ENCODE measurements at regions of chr15 and their contacts with region 1.

Region 1: DNA sequence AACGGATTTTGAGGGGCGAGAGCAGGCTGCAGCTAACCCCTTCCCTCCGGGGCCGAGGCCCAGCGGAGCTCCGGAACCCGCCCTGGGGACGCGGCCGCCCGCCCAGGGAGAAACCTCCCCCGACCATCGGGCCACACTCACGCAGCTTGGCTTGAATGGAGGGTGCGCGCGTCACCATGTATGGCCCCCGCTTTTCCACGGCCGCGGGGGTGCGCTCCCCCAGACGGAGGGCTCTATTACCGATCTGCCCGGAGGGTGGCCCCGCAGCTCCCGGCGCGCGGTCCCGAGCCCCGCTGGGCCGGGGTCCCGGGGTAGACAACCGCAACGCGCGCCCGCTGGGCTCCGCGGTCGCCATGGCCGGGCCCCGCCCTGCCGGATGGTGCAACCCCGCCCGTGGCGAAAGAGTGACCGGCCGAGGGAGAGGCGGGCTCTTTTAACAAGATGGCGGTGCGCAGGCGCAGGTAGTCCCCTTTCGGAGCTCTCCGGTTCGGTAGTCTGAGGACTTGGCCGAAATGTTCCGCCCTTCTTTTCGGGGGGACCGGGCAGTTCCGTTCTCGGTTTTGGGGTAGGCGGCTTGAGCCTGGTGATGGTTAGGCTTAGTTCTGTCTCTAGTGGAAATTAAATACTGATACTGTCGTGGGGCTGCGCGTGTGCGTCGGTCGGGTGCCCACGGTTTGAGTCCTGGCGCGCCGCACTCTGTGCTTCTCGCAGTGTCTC is at the start of gene FAM219B:
- DNase-seq: peak; percentile 30 to 84 (median 71)
- ATAC-seq: peak; percentile 79
- H3K4me3 ChIP-seq: peak within 1 kb of the TSS; percentile 85 to 89
- H3K4me3 Mint-ChIP-seq: peak within 1 kb of the TSS; percentile 94
- H3K27ac ChIP-seq: peak within 1 kb of the TSS; percentile 78 to 82
- H3K27ac Mint-ChIP-seq: peak within 1 kb of the TSS; percentile 95
- H3K4me1 ChIP-seq: peaks cover 28% of the 10 kb centered on the region
- H3K4me1 Mint-ChIP-seq: peaks cover 41% of the 10 kb centered on the region
- H3K27me3 ChIP-seq: no peaks in the 10 kb centered on the region
- H3K27me3 Mint-ChIP-seq: no peaks in the 10 kb centered on the region
- CTCF ChIP-seq: no peak
- total RNA-seq, gene FAM219B: 18.6 to 22.1 TPM

Region 2: GRCh38 chr15:74134387-74135027 is 772.1 kb before region 1 on chr15:
- CTCF ChIA-PET with region 1: no interaction called
- POLR2A ChIA-PET with region 1: no interaction called
- intact Hi-C with region 1: no loop called
- DNase-seq: no peak
- ATAC-seq: no peak
- H3K4me3 ChIP-seq: no peak overlapping the region
- H3K4me3 Mint-ChIP-seq: no peak overlapping the region
- H3K27ac ChIP-seq: no peak overlapping the region
- H3K27ac Mint-ChIP-seq: no peak overlapping the region
- H3K4me1 ChIP-seq: peaks cover 23% of the 10 kb centered on the region
- H3K4me1 Mint-ChIP-seq: peaks cover 35% of the 10 kb centered on the region
- H3K27me3 ChIP-seq: peaks cover 39 to 41% of the 10 kb centered on the region in 2 experiments
- H3K27me3 Mint-ChIP-seq: peaks cover 73% of the 10 kb centered on the region
- CTCF ChIP-seq: no peak

Region 3: GRCh38 chr15:74548241-74548640 is 358.4 kb before region 1 on chr15:
- CTCF ChIA-PET with region 1: no interaction called
- POLR2A ChIA-PET with region 1: no interaction called
- intact Hi-C with region 1: no loop called
- DNase-seq: no peak
- ATAC-seq: no peak
- H3K4me3 ChIP-seq: no peak overlapping the region
- H3K4me3 Mint-ChIP-seq: no peak overlapping the region
- H3K27ac ChIP-seq: no peak overlapping the region
- H3K27ac Mint-ChIP-seq: no peak overlapping the region
- H3K4me1 ChIP-seq: peaks cover 51% of the 10 kb centered on the region
- H3K4me1 Mint-ChIP-seq: peaks cover 79% of the 10 kb centered on the region
- H3K27me3 ChIP-seq: no peaks in the 10 kb centered on the region
- H3K27me3 Mint-ChIP-seq: no peaks in the 10 kb centered on the region
- CTCF ChIP-seq: no peak

Region 4: DNA sequence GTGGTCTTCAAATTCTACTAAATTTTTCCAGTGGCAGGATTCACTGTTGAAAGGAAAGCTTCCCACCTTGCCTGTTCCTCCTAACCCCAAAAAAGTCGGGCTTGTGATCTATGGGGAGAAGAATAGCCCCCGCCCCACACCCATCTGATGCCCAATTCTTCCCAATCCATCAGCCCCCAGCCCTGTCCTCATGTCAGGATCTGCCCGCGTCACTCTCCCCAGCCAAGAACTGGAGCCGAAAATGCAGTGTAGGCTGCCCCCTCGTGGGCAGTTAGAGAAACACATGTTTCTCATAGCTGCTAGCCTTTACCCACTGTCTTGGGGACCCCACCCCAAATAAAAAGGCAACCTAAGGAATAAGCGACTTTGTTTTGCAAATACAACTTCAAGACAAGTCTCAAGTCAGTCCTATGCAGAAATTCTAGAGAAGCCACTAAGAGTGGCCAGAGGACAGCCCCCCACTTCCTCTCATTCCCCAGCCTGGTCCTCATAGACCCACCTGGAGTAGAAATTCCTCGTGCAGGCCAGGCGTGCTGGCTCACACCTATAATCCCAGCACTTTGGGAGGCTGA is 137.7 kb before region 1 on chr15:
- CTCF ChIA-PET with region 1: interaction called, 103 read pairs
- POLR2A ChIA-PET with region 1: interaction called, 6 read pairs
- intact Hi-C with region 1: loop called (anchors 1 to 2 kb)
- DNase-seq: peak in 6 of 9 experiments; percentile 58 to 77 (median 70)
- ATAC-seq: peak; percentile 65
- H3K4me3 ChIP-seq: no peak overlapping the region
- H3K4me3 Mint-ChIP-seq: no peak overlapping the region
- H3K27ac ChIP-seq: no peak overlapping the region
- H3K27ac Mint-ChIP-seq: no peak overlapping the region
- H3K4me1 ChIP-seq: peaks cover 17% of the 10 kb centered on the region
- H3K4me1 Mint-ChIP-seq: peaks cover 21% of the 10 kb centered on the region
- H3K27me3 ChIP-seq: no peaks in the 10 kb centered on the region
- H3K27me3 Mint-ChIP-seq: peaks cover 4% of the 10 kb centered on the region
- CTCF ChIP-seq: peak; percentile 71

Region 5: GRCh38 chr15:74835307-74835823 is 71.2 kb before region 1 on chr15:
- CTCF ChIA-PET with region 1: interaction called, 62 read pairs
- POLR2A ChIA-PET with region 1: interaction called, 3 read pairs
- intact Hi-C with region 1: no loop called
- DNase-seq: peak in 8 of 9 experiments; percentile 13 to 62 (median 44)
- ATAC-seq: peak; percentile 65
- H3K4me3 ChIP-seq: no peak overlapping the region
- H3K4me3 Mint-ChIP-seq: no peak overlapping the region
- H3K27ac ChIP-seq: no peak overlapping the region
- H3K27ac Mint-ChIP-seq: no peak overlapping the region
- H3K4me1 ChIP-seq: no peaks in the 10 kb centered on the region
- H3K4me1 Mint-ChIP-seq: no peaks in the 10 kb centered on the region
- H3K27me3 ChIP-seq: no peaks in the 10 kb centered on the region
- H3K27me3 Mint-ChIP-seq: peaks cover 2% of the 10 kb centered on the region
- CTCF ChIP-seq: peak; percentile 62

Region 6: DNA sequence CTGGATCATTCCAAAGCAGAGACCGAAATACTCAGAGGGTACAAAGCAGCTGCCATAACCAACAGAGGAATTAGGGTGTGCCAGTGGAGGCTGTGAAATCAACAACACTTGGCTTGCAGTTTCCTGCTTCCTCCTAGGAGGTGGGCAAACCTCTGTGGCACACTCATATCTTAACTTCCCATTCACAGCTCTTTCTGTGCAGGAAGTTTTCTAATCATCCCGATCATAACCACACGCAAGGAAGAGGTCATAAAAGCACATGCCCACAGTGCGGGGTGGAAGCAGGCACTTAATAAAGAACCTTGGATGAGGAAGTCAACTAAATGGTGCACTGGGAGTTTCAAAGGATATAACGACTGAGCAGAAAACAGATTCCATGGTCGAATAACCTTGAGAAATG is 38.5 kb before region 1 on chr15:
- CTCF ChIA-PET with region 1: interaction called, 22 read pairs
- POLR2A ChIA-PET with region 1: interaction called, 7 read pairs
- intact Hi-C with region 1: loop called (anchors 5 kb)
- DNase-seq: peak in 1 of 9 experiments; percentile 50
- ATAC-seq: no peak
- H3K4me3 ChIP-seq: no peak overlapping the region
- H3K4me3 Mint-ChIP-seq: peak overlapping the region; percentile 60
- H3K27ac ChIP-seq: peak overlapping the region; percentile 20 to 75
- H3K27ac Mint-ChIP-seq: peak overlapping the region; percentile 83
- H3K4me1 ChIP-seq: peaks cover 83% of the 10 kb centered on the region
- H3K4me1 Mint-ChIP-seq: peaks cover 80% of the 10 kb centered on the region
- H3K27me3 ChIP-seq: no peaks in the 10 kb centered on the region
- H3K27me3 Mint-ChIP-seq: no peaks in the 10 kb centered on the region
- CTCF ChIP-seq: no peak

Region 7: GRCh38 chr15:74884428-74885223 is 22.0 kb before region 1 on chr15:
- CTCF ChIA-PET with region 1: interaction called, 28 read pairs
- POLR2A ChIA-PET with region 1: interaction called, 6 read pairs
- intact Hi-C with region 1: no loop called
- DNase-seq: no peak
- ATAC-seq: no peak
- H3K4me3 ChIP-seq: no peak overlapping the region
- H3K4me3 Mint-ChIP-seq: no peak overlapping the region
- H3K27ac ChIP-seq: no peak overlapping the region
- H3K27ac Mint-ChIP-seq: no peak overlapping the region
- H3K4me1 ChIP-seq: peaks cover 5% of the 10 kb centered on the region
- H3K4me1 Mint-ChIP-seq: peaks cover 12% of the 10 kb centered on the region
- H3K27me3 ChIP-seq: no peaks in the 10 kb centered on the region
- H3K27me3 Mint-ChIP-seq: no peaks in the 10 kb centered on the region
- CTCF ChIP-seq: no peak

Region 8: DNA sequence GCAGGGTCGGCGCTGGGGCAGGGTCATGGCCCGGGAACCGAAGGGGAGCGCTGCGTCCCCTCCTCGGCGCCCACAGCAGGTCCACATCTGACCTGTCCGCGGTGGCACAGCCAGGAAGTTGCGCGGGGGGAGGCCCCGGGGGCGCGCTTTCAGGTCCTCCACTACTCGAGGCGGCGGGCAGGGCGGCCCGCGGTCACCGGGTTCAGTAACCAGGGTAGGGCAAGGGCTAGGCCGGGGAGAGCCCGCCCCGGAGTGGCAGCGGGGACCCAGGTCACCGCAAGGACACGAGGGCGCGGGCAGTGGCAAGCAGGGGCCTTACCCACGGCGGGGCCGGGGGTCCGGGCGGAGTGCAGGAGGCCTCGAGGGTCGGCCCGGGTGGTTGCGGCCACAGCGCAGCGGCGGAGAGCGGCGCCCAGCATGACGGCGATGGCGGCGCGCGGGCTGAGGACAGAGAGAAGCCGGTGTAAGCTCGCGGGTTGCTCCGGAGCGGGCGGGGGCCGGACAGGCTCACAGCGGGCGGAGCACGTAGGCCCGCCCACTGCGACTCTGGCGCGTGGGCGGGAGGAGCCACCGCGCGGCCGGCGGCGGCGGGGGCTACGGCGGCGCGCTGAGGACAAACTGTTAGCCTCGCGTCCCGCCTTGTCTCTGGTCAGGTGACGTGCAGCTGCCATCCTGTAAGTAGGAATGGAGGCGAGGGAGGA is 31.1 kb after region 1 on chr15 and contains the start of gene COX5A:
- CTCF ChIA-PET with region 1: interaction called, 7 read pairs
- POLR2A ChIA-PET with region 1: interaction called, 12 read pairs
- intact Hi-C with region 1: loop called (anchors 1 kb)
- DNase-seq: peak; percentile 83 to 97 (median 88)
- ATAC-seq: peak; percentile 96
- H3K4me3 ChIP-seq: peak within 1 kb of the TSS; percentile 73 to 86
- H3K4me3 Mint-ChIP-seq: peak within 1 kb of the TSS; percentile 88
- H3K27ac ChIP-seq: peak within 1 kb of the TSS; percentile 72 to 73
- H3K27ac Mint-ChIP-seq: peak within 1 kb of the TSS; percentile 92
- H3K4me1 ChIP-seq: peaks cover 14% of the 10 kb centered on the region
- H3K4me1 Mint-ChIP-seq: peaks cover 31% of the 10 kb centered on the region
- H3K27me3 ChIP-seq: no peaks in the 10 kb centered on the region
- H3K27me3 Mint-ChIP-seq: no peaks in the 10 kb centered on the region
- CTCF ChIP-seq: no peak
- total RNA-seq, gene COX5A: 40.0 to 42.6 TPM